Activated naive CD8-positive, alpha-beta T cell treated with anti-CD3 and anti-CD28 coated beads, Interleukin-2, amount 10 ng/mL, durations not matched to agents 7 days and 5 days (primary cell): ENCODE measurements at regions of chr17 and their contacts with region 1.

Region 1: GRCh38 chr17:80832888-80833583 is 158.6 kb upstream of the CHMP6 start:
- DNase-seq: peak; percentile 82
- ATAC-seq: peak; percentile 92
- H3K4me3 Mint-ChIP-seq: peak overlapping the region; percentile 68
- H3K27ac Mint-ChIP-seq: peak overlapping the region; percentile 86
- H3K4me1 Mint-ChIP-seq: peaks cover 31% of the 10 kb centered on the region
- H3K27me3 Mint-ChIP-seq: no peaks in the 10 kb centered on the region

Region 2: DNA sequence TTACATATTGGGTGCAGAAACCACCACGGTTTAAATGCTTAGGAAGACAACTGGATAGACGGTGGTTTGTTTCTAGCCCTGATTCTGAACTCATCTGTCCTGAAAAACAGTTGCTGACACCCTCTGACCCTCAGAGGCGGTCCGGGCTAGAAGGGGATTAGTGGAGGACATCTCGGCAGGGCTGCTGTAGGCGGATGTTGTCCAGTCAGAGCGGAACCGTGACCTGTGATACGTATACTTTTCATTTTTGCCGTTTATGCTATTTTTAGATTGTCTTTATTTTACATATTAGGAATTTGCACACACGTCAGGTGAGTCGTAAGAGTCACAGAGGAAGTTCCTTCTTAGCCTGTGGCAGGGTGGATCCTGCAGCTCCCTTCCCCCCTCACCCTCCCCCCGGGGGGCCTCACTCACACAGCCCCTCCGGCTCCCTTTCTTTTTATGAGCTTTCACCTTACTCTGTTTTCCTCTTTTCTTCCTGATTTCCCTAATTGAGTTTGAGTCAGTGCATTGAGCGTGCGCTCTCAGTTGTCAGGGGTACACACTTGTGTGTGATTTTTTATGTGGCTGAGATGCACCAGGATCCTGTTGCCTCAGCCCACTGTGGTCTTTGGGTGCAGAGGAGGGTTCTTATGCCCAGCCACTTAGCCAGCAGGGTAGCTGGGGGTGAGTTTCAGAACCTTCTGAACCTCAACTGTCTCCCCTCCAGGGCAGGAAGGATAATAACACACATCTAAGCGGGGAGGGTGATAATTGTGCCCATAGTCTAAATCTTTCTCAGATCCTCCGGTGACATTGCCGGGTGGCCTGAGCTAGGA is 52.4 kb before region 1 on chr17:
- POLR2A ChIA-PET with region 1: interaction called, 28 read pairs
- DNase-seq: peak; percentile 64
- ATAC-seq: peak; percentile 64
- H3K4me3 Mint-ChIP-seq: peak overlapping the region; percentile 74
- H3K27ac Mint-ChIP-seq: peak overlapping the region; percentile 96
- H3K4me1 Mint-ChIP-seq: peaks cover 63% of the 10 kb centered on the region
- H3K27me3 Mint-ChIP-seq: no peaks in the 10 kb centered on the region

Region 3: DNA sequence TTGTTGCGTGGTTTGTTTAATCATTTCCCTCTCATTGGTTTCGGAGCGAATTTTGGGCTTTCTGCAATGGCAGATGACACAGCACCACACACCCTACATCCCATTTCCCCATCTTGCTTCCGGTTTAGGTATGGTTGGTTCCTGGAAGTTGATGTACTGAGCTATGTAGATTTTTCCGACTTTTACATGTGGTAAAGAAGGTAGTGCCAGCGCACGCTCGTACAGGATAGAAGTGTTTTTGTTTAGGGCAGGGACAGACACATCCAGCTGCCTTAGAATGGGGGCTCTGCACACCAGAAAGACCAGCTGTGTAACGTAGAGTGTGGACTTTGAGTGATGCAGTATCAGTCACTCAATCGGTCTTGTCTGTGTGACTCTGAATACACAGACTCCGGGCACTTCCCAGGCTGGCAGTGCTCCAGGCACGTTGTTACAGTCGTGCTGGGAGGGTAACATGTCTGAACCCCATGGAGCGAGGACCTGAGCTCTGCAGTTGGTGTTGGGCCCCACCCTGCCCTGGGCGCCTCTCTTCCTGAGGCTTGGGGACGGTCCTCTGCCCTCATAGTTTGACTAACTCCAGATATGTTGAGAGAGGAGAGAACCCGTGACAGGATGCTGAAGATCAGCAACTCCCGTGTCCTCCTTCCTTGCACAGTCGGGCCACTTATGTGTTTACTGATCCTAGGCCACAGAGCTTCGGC is 13.4 kb before region 1 on chr17:
- POLR2A ChIA-PET with region 1: interaction called, 10 read pairs
- DNase-seq: peak; percentile 31
- ATAC-seq: peak; percentile 68
- H3K4me3 Mint-ChIP-seq: peak overlapping the region; percentile 43
- H3K27ac Mint-ChIP-seq: peak overlapping the region; percentile 76
- H3K4me1 Mint-ChIP-seq: peaks cover 29% of the 10 kb centered on the region
- H3K27me3 Mint-ChIP-seq: no peaks in the 10 kb centered on the region

Region 4: DNA sequence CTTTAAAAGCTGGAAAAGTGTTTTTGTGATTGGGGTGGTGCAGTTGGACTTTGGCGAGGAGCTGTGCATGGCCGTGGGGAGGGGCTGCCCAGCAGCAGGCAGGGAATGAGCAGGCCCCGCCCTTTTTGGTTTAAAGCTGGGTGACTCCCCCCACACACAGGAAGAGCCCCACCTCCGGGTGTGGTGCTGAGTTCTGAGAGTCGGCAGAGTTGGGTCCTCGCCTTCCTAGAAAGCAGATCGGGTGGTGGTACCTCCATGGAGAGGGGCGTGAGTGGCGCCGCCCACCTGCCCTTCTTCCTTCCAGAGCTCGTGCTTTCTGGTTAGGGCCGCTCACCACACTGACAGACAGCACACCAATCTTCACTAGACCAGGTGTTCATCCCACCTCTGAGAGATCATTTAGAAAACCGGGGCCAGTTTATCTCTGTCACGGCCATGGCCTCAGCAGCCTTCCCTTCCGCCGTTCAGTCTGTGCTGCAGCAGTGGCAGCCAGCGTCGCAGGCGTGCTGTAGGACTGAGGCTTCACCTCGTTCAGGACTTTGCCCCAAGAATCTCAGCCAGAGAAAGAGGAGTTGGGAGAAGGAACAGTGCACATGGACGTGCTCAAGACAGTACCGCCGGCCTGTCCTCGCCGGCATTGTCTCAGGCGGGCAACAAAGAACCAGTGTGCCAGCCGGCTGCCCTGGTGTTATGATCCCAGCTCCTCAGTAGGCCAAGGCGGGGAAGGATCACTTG is 14.6 kb after region 1 on chr17:
- POLR2A ChIA-PET with region 1: interaction called, 31 read pairs
- DNase-seq: peak; percentile 80
- ATAC-seq: peak; percentile 96
- H3K4me3 Mint-ChIP-seq: peak overlapping the region; percentile 68
- H3K27ac Mint-ChIP-seq: peak overlapping the region; percentile 87
- H3K4me1 Mint-ChIP-seq: peaks cover 50% of the 10 kb centered on the region
- H3K27me3 Mint-ChIP-seq: no peaks in the 10 kb centered on the region

Region 5: DNA sequence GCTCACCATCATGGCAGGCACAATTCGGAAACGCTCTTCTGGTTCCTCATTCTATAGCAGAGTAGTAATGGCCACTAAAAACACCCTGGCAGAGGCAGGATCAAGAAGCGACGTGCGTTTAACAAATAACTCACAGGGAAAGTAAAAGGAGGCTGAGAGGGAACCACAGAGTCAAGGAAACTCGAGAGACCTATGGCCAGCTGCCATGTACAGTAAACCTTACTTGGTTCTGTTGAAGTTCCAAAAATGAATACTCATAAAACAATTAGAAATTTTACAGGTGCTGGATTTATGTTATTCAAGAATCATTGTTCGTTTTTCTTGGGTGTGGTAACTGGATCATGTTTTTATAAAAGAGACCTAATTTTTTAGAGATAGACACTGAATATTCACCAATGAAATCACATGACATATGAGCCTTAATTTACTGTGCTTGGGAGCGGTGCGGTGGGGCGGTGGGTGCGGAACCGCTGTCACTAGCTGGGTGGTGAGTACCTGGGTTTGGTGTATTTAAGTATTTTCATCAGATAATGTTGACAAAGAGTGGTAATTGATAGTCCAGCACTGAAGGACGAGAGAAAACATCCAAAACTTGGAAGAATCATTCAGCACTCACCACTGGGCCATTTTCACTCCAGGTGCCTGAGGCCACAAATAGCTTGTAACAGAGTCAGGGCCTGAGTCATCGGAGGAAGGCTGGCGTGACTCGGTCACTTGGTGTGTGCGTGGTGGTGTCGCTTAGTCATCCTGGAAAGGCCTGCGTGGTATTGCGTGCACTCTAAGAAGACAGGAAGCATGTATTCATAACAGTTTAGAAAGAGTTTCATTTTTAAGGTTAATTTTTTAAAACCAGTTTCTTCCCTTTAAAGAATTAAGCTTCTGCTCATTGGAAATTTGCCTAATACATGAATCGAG is 23.2 kb after region 1 on chr17:
- POLR2A ChIA-PET with region 1: interaction called, 16 read pairs
- DNase-seq: peak; percentile 76
- ATAC-seq: peak; percentile 98
- H3K4me3 Mint-ChIP-seq: peak overlapping the region; percentile 47
- H3K27ac Mint-ChIP-seq: peak overlapping the region; percentile 94
- H3K4me1 Mint-ChIP-seq: peaks cover 57% of the 10 kb centered on the region
- H3K27me3 Mint-ChIP-seq: no peaks in the 10 kb centered on the region

Region 6: GRCh38 chr17:80898716-80899115 is 65.7 kb after region 1 on chr17:
- POLR2A ChIA-PET with region 1: no interaction called
- DNase-seq: no peak
- ATAC-seq: no peak
- H3K4me3 Mint-ChIP-seq: no peak overlapping the region
- H3K27ac Mint-ChIP-seq: peak overlapping the region; percentile 51
- H3K4me1 Mint-ChIP-seq: peaks cover 34% of the 10 kb centered on the region
- H3K27me3 Mint-ChIP-seq: no peaks in the 10 kb centered on the region